Activated T-helper 1 cell treated with anti-CD3 and anti-CD28 coated beads, Interleukin-12 subunit alpha, Interleukin-12 subunit beta, Interleukin-2, Interleukin-4 antibody, amounts not matched to agents 30 ng/mL and 10 ng/mL and 1 ng/mL, durations not matched to agents 14 hours and 24 hours and 36 hours (primary cell): ENCODE measurements at regions of chr3 and their contacts with region 1.

Region 1: DNA sequence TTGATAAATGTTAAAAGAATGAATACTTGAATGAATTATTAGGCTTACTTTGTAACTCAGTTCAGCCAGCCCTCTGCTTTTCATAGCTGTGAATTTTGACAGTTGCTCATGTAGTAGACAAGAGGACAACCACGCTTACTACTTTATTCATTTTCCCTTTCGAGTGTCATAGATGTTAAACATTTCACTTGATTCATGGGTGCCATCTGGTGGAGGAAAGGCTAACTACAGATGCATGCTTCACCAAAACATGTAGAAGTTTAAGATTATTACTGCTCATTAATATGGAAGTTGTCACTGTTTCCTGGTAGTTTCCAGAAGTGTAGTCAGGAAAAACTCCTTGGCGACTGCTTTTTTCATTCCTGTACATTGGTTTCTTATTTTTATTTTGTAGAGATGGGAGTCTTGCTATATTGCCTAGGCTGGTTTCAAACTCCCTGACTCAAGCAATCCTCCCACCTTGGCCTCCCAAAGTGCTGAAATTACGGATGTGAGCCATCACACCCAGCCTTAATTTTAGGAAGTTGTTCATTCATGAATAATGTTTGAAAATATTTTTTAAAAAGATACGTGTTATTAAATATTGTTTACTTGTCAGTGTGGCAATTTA is 163.2 kb downstream of the B3GALNT1 start:
- DNase-seq: peak; percentile 50
- H3K4me3 Mint-ChIP-seq: no peak overlapping the region
- H3K27ac Mint-ChIP-seq: no peak overlapping the region
- H3K4me1 Mint-ChIP-seq: peaks cover 7% of the 10 kb centered on the region
- H3K27me3 Mint-ChIP-seq: no peaks in the 10 kb centered on the region

Region 2: DNA sequence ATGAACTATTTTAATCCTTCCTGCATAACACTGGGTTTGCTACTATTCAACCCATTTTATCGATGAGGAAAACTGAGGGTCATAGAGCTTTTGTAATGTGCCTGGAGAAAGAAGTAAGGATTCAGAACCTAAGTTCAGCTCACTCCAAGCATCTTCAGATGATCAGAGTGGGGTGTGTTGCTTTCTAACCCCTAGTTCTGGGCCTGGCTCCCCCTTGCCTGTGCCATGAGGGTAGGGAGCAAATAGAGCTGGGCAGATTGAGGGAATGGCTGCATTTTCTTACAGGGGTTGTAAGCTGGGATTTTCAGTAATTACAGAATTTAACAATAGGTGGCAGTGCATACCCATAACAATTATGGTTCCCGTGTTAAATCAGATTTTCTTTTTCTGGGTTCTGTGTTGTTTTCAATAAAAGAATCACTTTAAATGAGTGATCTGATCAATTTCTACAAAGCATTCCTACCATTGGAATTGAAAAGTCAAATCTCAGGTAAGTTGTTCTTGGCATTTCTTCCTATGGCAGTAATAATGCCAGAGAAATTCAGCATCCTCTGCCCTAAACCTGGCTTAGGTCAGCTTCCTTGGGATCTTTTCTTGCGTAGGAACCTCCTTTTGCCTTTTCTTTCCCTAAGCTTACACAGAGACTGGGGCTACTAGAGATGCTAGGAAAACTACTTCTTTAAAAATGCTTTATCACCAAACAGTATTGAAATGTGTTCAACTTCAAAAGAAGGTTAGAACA is 1057.2 kb before region 1 on chr3:
- intact Hi-C with region 1: loop called (anchors 5 kb)
- DNase-seq: no peak
- H3K4me3 Mint-ChIP-seq: no peak overlapping the region
- H3K27ac Mint-ChIP-seq: no peak overlapping the region
- H3K4me1 Mint-ChIP-seq: no peaks in the 10 kb centered on the region
- H3K27me3 Mint-ChIP-seq: peaks cover 4% of the 10 kb centered on the region

Region 3: GRCh38 chr3:160686955-160687535 is 254.9 kb before region 1 on chr3:
- intact Hi-C with region 1: loop called (anchors 1 kb)
- DNase-seq: no peak
- H3K4me3 Mint-ChIP-seq: no peak overlapping the region
- H3K27ac Mint-ChIP-seq: no peak overlapping the region
- H3K4me1 Mint-ChIP-seq: no peaks in the 10 kb centered on the region
- H3K27me3 Mint-ChIP-seq: no peaks in the 10 kb centered on the region

Region 4: DNA sequence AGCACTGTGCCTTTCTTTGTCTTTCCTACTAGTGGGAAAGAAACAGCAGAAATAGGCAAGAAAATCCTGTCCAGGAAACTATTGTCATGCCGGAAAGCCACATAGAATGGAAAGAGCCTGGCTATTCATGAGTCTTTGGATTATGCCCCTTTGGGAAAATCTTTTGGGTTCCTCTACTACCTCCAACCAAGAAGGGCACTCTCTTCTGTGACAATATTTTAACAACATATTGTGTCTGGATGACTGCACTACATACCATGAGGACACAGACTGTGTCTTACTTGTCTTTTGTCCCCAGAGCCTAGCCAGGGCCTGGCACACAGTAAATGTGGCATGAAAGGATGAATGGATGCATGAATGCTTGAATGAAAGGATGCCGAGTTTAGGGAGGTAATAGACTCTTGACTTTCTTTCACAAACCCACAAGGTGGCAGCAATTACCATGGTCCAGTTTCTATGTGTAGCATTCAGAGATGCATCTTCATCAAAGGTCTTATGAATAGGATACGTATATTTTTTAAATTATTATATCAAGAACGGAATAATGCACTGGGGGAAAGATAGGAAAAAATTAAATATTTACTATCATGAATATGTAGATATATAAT is 234.7 kb before region 1 on chr3:
- intact Hi-C with region 1: loop called (anchors 1 kb)
- DNase-seq: peak; percentile 8
- H3K4me3 Mint-ChIP-seq: no peak overlapping the region
- H3K27ac Mint-ChIP-seq: no peak overlapping the region
- H3K4me1 Mint-ChIP-seq: no peaks in the 10 kb centered on the region
- H3K27me3 Mint-ChIP-seq: peaks cover 15% of the 10 kb centered on the region

Region 5: GRCh38 chr3:160754855-160755747 is 186.9 kb before region 1 on chr3:
- intact Hi-C with region 1: loop called (anchors 1 kb)
- DNase-seq: peak; percentile 84
- H3K4me3 Mint-ChIP-seq: peak overlapping the region; percentile 93
- H3K27ac Mint-ChIP-seq: peak overlapping the region; percentile 98
- H3K4me1 Mint-ChIP-seq: peaks cover 37% of the 10 kb centered on the region
- H3K27me3 Mint-ChIP-seq: peaks cover 40% of the 10 kb centered on the region

Region 6: GRCh38 chr3:160801386-160802118 is 140.4 kb before region 1 on chr3:
- intact Hi-C with region 1: loop called (anchors 5 kb)
- DNase-seq: peak; percentile 70
- H3K4me3 Mint-ChIP-seq: peak overlapping the region; percentile 64
- H3K27ac Mint-ChIP-seq: peak overlapping the region; percentile 85
- H3K4me1 Mint-ChIP-seq: peaks cover 36% of the 10 kb centered on the region
- H3K27me3 Mint-ChIP-seq: peaks cover 12% of the 10 kb centered on the region

Region 7: DNA sequence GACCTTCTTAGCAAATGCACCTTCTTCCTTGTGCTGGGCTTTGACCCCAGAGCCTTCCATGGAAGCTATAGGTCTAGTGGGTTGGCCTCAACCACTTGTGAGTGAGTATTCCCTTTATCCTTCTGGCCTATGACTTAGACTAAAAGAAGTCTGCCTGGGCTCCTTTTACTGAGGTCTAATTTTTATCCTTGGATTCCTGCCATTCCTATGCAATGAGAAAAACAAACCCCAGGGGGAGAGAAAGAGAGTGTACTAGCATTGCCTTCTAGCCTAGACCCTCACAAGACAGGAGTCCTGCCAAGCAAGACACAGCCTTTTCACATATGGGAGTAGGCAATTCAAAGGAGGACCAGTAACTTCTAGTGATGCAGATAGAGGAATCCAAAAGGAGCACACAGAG is 30.6 kb before region 1 on chr3:
- intact Hi-C with region 1: no loop called
- DNase-seq: no peak
- H3K4me3 Mint-ChIP-seq: no peak overlapping the region
- H3K27ac Mint-ChIP-seq: no peak overlapping the region
- H3K4me1 Mint-ChIP-seq: no peaks in the 10 kb centered on the region
- H3K27me3 Mint-ChIP-seq: peaks cover 3% of the 10 kb centered on the region

Region 8: GRCh38 chr3:161423911-161424522 is 482.0 kb after region 1 on chr3:
- intact Hi-C with region 1: loop called (anchors 5 kb)
- DNase-seq: no peak
- H3K4me3 Mint-ChIP-seq: no peak overlapping the region
- H3K27ac Mint-ChIP-seq: no peak overlapping the region
- H3K4me1 Mint-ChIP-seq: no peaks in the 10 kb centered on the region
- H3K27me3 Mint-ChIP-seq: peaks cover 16% of the 10 kb centered on the region

Region 9: GRCh38 chr3:162632672-162633071 is 1690.7 kb after region 1 on chr3:
- intact Hi-C with region 1: no loop called
- DNase-seq: no peak
- H3K4me3 Mint-ChIP-seq: no peak overlapping the region
- H3K27ac Mint-ChIP-seq: no peak overlapping the region
- H3K4me1 Mint-ChIP-seq: no peaks in the 10 kb centered on the region
- H3K27me3 Mint-ChIP-seq: no peaks in the 10 kb centered on the region